Right ventricle myocardium inferior (tissue), 1 donor: ENCODE measurements at regions of chr12 and their contacts with region 1.

Region 1: DNA sequence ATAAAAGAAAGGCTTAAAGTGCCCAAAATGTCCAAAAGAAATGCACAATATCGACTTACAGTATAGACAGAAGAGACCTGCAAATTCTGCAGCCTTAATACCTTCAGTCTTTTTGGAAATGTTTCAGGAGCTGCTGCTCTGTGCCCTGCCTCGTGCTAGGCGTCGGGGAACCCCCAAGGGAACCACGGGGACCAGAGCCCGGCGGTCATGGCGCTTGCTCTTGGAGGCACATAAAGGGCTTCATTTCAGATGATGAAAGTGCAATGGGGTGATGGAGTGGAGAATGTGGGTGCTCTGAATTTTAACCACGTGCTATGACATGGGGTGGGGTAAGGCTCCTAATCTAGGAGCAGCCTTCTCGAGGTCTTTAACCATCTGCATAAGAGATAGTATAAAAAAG is 14.8 kb upstream of the AACS start:
- DNase-seq: no peak
- ATAC-seq: no peak

Region 2: GRCh38 chr12:124824195-124824594 is 226.3 kb before region 1 on chr12:
- intact Hi-C with region 1: no loop called
- DNase-seq: no peak
- ATAC-seq: no peak

Region 3: DNA sequence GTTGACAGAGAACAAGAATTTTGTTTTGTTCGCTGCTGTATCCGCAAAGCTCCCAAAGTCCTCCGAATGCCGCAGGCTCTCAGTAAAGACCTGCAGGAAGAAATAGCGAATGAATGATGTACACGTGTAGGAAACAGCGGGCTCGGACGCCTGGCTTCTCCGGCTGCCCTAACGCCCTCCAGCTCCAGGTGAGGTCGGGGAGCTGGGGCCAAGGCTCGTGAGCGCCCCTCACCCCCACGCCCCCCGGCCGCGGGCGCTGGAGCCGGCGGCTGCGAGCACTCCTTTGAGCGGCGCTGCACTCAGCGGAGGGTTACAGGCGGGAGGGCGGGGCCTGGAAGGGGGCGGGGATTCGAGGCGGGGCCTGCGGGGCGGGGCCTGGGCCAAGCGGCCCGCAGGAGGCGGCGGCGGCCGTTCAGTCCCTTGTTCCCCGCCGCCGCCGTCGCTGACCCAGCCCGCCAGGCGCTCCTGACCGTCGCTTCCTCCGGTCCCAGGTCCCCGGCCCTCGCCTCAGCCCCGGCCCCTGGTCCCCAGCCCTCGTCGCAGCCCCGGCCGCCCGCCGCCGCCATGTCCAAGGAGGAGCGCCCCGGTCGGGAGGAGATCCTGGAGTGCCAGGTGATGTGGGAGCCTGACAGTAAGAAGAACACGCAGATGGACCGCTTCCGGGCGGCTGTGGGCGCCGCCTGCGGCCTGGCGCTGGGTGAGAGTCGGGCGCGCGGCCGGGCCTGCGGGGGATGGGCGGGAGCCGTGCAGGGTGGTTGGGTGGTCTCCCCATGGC is 14.8 kb after region 1 on chr12 and contains the start of gene AACS:
- intact Hi-C with region 1: loop called (anchors 2 kb)
- DNase-seq: peak; percentile 91
- ATAC-seq: peak; percentile 96
- total RNA-seq, gene AACS: 12.1 TPM